Activated T-helper 1 cell treated with anti-CD3 and anti-CD28 coated beads, Interleukin-12 subunit alpha, Interleukin-12 subunit beta, Interleukin-2, Interleukin-4 antibody, amounts not matched to agents 30 ng/mL and 10 ng/mL and 1 ng/mL, durations not matched to agents 14 hours and 24 hours and 36 hours (primary cell): ENCODE measurements at regions of chr13 and their contacts with region 1.

Region 1: DNA sequence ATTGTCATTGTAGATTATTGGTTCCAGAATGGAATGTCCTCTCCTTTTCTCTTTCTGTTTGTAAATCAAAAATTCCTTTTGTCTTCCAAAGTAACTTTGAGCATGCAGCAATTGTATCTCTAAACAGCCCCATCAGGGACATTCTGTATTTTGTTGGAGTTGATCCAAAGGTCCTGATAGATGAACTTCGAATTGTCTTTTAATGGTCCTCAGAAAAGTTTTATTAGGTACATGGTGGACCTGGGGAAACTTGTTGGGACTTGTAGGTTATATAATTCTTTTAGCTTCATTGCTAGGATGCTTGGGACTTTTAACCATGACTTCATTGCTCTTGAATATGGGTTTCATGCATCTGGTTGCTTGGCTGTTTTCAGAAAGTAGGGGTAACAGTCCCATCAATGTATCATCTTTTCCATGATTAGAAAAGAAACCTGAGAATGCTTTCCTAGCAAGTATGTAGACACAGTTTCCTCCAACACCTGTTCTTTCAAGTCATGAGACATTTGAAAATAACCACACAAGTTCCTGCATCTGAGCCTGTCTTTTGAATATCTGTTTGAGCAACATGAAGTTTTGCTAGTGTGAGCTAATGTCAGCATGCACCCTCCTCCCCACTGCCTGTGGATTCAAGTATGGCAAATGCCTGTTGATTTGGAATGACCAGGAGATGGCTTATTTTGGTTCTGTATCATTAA is 413.1 kb downstream of the KCNRG start:
- DNase-seq: no peak
- H3K4me3 Mint-ChIP-seq: no peak overlapping the region
- H3K27ac Mint-ChIP-seq: peak overlapping the region; percentile 56
- H3K4me1 Mint-ChIP-seq: peaks cover 11% of the 10 kb centered on the region
- H3K27me3 Mint-ChIP-seq: peaks cover 5% of the 10 kb centered on the region

Region 2: DNA sequence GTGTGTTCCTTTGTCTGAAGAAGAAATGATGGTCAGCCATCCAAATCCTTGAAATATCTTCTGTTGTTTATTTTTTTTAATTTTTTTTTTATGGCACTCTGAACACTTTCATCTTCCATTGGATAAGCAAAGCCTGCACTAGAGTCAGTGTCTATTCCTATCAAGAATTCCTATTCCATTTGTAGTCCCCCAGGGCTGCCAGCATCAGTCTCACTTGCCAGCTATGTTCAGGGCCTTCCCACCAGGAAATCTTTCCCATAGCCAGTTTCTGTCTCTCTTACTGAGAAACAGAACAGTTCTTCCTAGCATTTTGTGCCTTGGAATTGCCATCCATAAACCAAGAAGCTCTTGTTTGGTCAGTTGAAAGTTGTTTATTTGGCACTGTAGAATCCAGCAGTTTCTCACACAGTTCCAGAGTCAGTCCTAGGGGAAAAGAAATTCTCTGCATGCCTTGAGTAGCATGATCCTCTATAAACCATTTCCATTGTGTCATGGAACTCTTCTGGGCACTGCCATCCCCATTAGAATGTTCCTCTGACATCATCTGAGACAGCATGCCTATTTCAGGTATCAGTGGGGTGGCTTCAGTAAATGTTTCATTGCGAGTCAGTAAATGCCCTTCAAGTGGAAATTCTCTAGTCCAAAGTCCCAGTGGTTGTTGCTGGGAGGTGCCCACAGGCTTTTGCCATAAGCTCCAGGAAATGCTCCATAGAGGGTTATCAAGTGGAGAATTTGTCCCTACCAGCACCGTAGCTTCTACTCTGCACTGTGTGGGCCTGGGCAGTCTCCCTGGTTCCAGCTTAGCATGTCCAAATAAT is 473.4 kb before region 1 on chr13:
- intact Hi-C with region 1: no loop called
- DNase-seq: no peak
- H3K4me3 Mint-ChIP-seq: no peak overlapping the region
- H3K27ac Mint-ChIP-seq: no peak overlapping the region
- H3K4me1 Mint-ChIP-seq: no peaks in the 10 kb centered on the region
- H3K27me3 Mint-ChIP-seq: no peaks in the 10 kb centered on the region

Region 3: GRCh38 chr13:50152655-50153309 is 275.5 kb before region 1 on chr13:
- intact Hi-C with region 1: no loop called
- DNase-seq: no peak
- H3K4me3 Mint-ChIP-seq: no peak overlapping the region
- H3K27ac Mint-ChIP-seq: no peak overlapping the region
- H3K4me1 Mint-ChIP-seq: peaks cover 17% of the 10 kb centered on the region
- H3K27me3 Mint-ChIP-seq: peaks cover 31% of the 10 kb centered on the region

Region 4: DNA sequence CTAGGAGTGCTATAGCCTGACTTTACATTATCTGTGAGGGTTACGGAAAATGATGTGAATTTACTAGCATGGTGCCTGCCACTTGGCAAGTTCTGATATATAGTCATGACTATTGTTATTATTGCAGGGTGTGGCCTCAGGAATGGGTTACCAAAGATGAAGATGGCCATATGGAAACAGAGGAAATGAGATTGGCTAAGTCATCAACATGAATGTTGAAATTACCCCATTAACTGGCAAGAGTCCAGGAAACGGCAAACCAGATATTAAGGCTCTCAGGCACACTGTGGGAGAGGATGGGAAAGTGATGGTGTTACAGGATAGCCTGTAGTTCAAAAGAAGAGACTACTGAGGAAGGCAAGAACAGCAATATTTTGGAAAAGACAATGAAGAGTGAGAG is 229.8 kb before region 1 on chr13:
- intact Hi-C with region 1: no loop called
- DNase-seq: no peak
- H3K4me3 Mint-ChIP-seq: no peak overlapping the region
- H3K27ac Mint-ChIP-seq: no peak overlapping the region
- H3K4me1 Mint-ChIP-seq: no peaks in the 10 kb centered on the region
- H3K27me3 Mint-ChIP-seq: peaks cover 21% of the 10 kb centered on the region

Region 5: DNA sequence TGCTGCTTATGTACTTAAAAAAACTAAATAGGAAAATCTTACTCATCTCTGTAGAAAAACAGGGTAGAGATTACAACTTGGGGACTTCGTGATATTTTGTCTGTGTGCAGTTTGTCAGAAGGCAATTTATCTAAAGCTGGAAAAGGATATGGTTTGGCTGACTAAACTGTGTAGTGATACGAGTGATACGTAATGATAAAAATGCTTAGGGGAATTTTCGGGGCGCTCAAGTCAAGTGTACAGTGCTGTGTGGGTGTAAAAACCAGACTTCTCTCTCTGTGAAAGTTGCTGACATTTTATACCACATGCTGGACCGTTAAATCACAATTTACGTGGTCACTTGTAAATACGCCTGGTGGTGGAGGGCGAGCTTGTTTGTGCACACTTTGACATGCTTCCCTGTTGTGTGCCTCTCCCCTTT is 191.4 kb before region 1 on chr13:
- intact Hi-C with region 1: loop called (anchors 2 kb)
- DNase-seq: peak; percentile 45
- H3K4me3 Mint-ChIP-seq: peak overlapping the region; percentile 27
- H3K27ac Mint-ChIP-seq: peak overlapping the region; percentile 78
- H3K4me1 Mint-ChIP-seq: peaks cover 59% of the 10 kb centered on the region
- H3K27me3 Mint-ChIP-seq: peaks cover 22% of the 10 kb centered on the region

Region 6: GRCh38 chr13:50248516-50249143 is 179.7 kb before region 1 on chr13:
- intact Hi-C with region 1: no loop called
- DNase-seq: no peak
- H3K4me3 Mint-ChIP-seq: no peak overlapping the region
- H3K27ac Mint-ChIP-seq: peak overlapping the region; percentile 27
- H3K4me1 Mint-ChIP-seq: peaks cover 62% of the 10 kb centered on the region
- H3K27me3 Mint-ChIP-seq: peaks cover 34% of the 10 kb centered on the region

Region 7: DNA sequence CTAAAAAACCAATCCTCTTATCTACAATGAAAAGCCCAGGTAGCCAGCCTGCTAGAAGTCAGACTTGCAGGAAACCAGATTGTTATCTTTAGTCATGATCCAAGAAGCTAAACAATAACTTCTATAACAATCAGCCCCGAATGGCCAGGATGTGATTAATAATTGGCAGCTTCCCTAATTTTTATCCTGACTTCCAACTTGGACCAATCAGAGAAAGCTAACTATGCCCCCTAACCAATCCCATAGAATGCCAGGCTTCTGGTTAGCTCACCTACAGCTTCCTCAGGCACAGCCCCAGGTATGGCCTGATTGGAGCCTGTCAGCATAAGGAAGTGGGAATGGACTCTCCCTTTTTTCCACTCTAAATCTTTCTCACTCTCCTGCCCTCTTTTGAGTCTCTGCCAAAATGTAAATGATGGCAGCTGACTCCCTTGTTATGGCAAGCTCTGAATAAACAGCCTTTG is 20.2 kb after region 1 on chr13:
- intact Hi-C with region 1: loop called (anchors 2 kb)
- DNase-seq: no peak
- H3K4me3 Mint-ChIP-seq: no peak overlapping the region
- H3K27ac Mint-ChIP-seq: no peak overlapping the region
- H3K4me1 Mint-ChIP-seq: no peaks in the 10 kb centered on the region
- H3K27me3 Mint-ChIP-seq: peaks cover 11% of the 10 kb centered on the region